Activated CD4-positive, alpha-beta T cell treated with anti-CD3 and anti-CD28 coated beads for 36 hours (primary cell): ENCODE measurements at regions of chr13 and their contacts with region 1.

Region 1: GRCh38 chr13:100573121-100573520 is 15.5 kb downstream of the GGACT start:
- DNase-seq: peak; percentile 86
- ATAC-seq: peak; percentile 87
- H3K4me3 Mint-ChIP-seq: no peak overlapping the region
- H3K27ac Mint-ChIP-seq: no peak overlapping the region
- H3K4me1 Mint-ChIP-seq: peaks cover 12% of the 10 kb centered on the region
- H3K27me3 Mint-ChIP-seq: no peaks in the 10 kb centered on the region

Region 2: GRCh38 chr13:99331881-99332293 is 1241.2 kb before region 1 on chr13:
- CTCF ChIA-PET with region 1: no interaction called
- POLR2A ChIA-PET with region 1: no interaction called
- intact Hi-C with region 1: no loop called
- DNase-seq: peak; percentile 40
- ATAC-seq: peak; percentile 59
- H3K4me3 Mint-ChIP-seq: no peak overlapping the region
- H3K27ac Mint-ChIP-seq: no peak overlapping the region
- H3K4me1 Mint-ChIP-seq: peaks cover 65% of the 10 kb centered on the region
- H3K27me3 Mint-ChIP-seq: no peaks in the 10 kb centered on the region

Region 3: GRCh38 chr13:100560498-100561157 is 12.5 kb before region 1 on chr13:
- CTCF ChIA-PET with region 1: interaction called, 15 read pairs
- POLR2A ChIA-PET with region 1: no interaction called
- intact Hi-C with region 1: no loop called
- DNase-seq: no peak
- ATAC-seq: no peak
- H3K4me3 Mint-ChIP-seq: no peak overlapping the region
- H3K27ac Mint-ChIP-seq: no peak overlapping the region
- H3K4me1 Mint-ChIP-seq: no peaks in the 10 kb centered on the region
- H3K27me3 Mint-ChIP-seq: no peaks in the 10 kb centered on the region

Region 4: GRCh38 chr13:100588331-100589177 is 15.4 kb after region 1 on chr13 and contains the start of gene GGACT:
- CTCF ChIA-PET with region 1: interaction called, 94 read pairs
- POLR2A ChIA-PET with region 1: no interaction called
- intact Hi-C with region 1: no loop called
- DNase-seq: peak; percentile 90
- ATAC-seq: peak; percentile 94
- H3K4me3 Mint-ChIP-seq: peak within 1 kb of the TSS; percentile 75
- H3K27ac Mint-ChIP-seq: peak within 1 kb of the TSS; percentile 86
- H3K4me1 Mint-ChIP-seq: peaks cover 37% of the 10 kb centered on the region
- H3K27me3 Mint-ChIP-seq: no peaks in the 10 kb centered on the region
- total RNA-seq, gene GGACT: 6.8 to 7.0 TPM

Region 5: GRCh38 chr13:100848304-100848703 is 275.2 kb after region 1 on chr13:
- CTCF ChIA-PET with region 1: no interaction called
- POLR2A ChIA-PET with region 1: no interaction called
- intact Hi-C with region 1: loop called in 1 of 2 experiments (anchors 10 kb)
- DNase-seq: no peak
- ATAC-seq: no peak
- H3K4me3 Mint-ChIP-seq: no peak overlapping the region
- H3K27ac Mint-ChIP-seq: no peak overlapping the region
- H3K4me1 Mint-ChIP-seq: no peaks in the 10 kb centered on the region
- H3K27me3 Mint-ChIP-seq: no peaks in the 10 kb centered on the region

Region 6: GRCh38 chr13:101098873-101099272 is 525.8 kb after region 1 on chr13:
- CTCF ChIA-PET with region 1: no interaction called
- POLR2A ChIA-PET with region 1: no interaction called
- intact Hi-C with region 1: loop called in 1 of 2 experiments (anchors 2 kb)
- DNase-seq: no peak
- ATAC-seq: no peak
- H3K4me3 Mint-ChIP-seq: no peak overlapping the region
- H3K27ac Mint-ChIP-seq: no peak overlapping the region
- H3K4me1 Mint-ChIP-seq: no peaks in the 10 kb centered on the region
- H3K27me3 Mint-ChIP-seq: peaks cover 18% of the 10 kb centered on the region

Region 7: DNA sequence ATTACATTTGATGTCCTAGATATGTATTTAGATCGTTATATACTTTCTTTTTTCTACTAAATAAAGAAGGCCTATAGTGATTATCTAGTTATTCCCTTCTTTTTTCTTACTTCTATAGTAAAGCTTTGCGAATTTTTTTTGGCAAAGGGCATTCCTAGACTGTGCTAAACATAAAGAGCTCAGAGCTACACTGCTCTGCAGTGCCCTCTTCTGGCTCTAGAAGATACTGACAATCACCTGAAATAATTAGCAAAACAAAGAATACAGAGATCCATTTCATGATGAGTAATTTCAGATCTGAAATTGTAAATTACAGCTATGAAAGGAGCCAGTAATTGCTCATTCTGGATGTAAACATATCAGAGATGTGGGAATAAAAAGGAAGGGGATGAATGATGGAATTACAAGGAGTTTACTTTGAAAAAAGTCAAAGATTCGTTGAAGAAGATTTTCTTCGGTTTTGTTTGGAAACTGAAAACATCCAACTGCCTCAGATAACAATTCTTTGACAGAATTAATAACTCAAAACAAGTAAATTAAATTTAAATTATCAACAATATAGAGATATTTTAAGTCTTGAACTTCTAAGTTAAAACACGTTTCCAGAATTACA is 554.7 kb after region 1 on chr13:
- CTCF ChIA-PET with region 1: interaction called, 10 read pairs
- POLR2A ChIA-PET with region 1: interaction called, 4 read pairs
- intact Hi-C with region 1: loop called (anchors 1 to 5 kb)
- DNase-seq: peak; percentile 28
- ATAC-seq: peak; percentile 76
- H3K4me3 Mint-ChIP-seq: no peak overlapping the region
- H3K27ac Mint-ChIP-seq: no peak overlapping the region
- H3K4me1 Mint-ChIP-seq: peaks cover 2% of the 10 kb centered on the region
- H3K27me3 Mint-ChIP-seq: peaks cover 6% of the 10 kb centered on the region